ENCODE measurements at regions of chr1 and their contacts with region 1.

Region 1: GRCh38 chr1:55326496-55327243 is 111.5 kb upstream of the USP24 start:
- DNase-seq: no peak
- ATAC-seq: no peak
- H3K4me3 ChIP-seq: no peak overlapping the region
- H3K27ac ChIP-seq: no peak overlapping the region
- H3K4me1 ChIP-seq: no peaks in the 10 kb centered on the region
- H3K27me3 ChIP-seq: peaks cover 20 to 38% of the 10 kb centered on the region in 2 experiments
- CTCF ChIP-seq: no peak
- EP300 ChIP-seq: no peak
- POLR2A ChIP-seq: no peak
- RAD21 ChIP-seq: no peak

Region 2: DNA sequence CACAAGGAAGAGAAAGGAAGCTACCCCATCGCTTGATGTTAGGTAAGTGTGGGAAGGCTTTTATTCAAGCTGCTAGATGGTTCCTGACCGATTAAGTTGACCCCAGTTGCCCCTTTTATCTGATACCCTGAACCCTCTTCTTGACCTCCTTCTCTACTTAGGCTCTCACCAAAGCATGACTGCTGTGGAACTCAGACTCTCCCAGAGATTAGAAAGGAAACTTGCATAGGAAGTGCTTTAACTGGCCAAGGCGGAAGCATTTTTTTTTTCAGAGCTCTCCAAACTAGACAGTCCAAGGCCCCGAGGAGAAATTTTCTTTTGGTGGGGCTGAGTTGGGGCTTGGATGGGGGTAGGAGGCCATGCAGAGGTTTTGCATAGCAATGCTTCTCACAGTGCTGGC is 10.2 kb before region 1 on chr1:
- CTCF ChIA-PET with region 1: no interaction called
- POLR2A ChIA-PET with region 1: interaction called, 13 read pairs
- in situ Hi-C with region 1: no loop called
- intact Hi-C with region 1: no loop called
- DNase-seq: no peak
- ATAC-seq: no peak
- H3K4me3 ChIP-seq: no peak overlapping the region
- H3K27ac ChIP-seq: no peak overlapping the region
- H3K4me1 ChIP-seq: no peaks in the 10 kb centered on the region
- H3K27me3 ChIP-seq: peaks cover 14 to 43% of the 10 kb centered on the region in 2 experiments; a peak in 4 of 5 replicates
- CTCF ChIP-seq: no peak
- EP300 ChIP-seq: no peak
- POLR2A ChIP-seq: no peak
- RAD21 ChIP-seq: no peak